Activated CD4-positive, alpha-beta T cell treated with anti-CD3 and anti-CD28 coated beads, Interleukin-2, amount 10 ng/mL, durations not matched to agents 7 days and 5 days (primary cell): ENCODE measurements at regions of chr17 and their contacts with region 1.

Region 1: DNA sequence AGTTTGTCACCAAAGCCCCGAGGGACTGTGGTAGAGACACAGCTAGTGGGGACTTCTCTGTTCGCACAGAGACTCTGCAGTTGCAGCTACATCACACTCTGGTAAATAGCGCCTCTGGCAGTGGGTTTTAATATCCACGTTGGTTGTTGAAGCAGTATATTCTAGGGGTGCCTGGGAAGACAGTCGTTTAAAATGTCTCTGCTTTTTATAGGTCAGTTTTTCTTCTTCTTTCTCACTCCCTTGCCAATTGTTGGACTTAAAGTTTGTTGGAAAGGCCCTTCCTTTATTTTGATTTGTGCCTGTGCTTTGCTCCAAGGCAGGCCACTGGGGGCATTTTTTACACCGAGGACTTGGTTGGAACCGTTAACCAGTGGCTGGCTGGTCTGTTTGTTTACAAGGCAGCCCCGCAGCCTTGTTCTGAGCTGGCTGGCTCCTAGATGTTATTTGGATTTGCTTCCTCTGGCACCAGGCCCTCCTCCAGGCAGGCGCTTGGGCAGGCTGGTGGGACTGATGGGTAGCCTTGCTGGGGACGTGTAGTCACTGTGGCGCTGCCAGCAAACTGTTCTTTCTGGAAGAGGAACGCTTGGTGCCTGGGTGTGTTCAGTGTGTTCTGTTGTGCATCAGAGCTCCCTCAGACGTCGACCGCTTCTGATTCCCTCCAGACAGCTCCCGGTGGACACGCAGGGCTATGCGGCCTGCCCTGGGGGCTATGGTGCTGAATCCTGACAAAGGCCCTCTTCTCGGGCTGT is 218.2 kb upstream of the CHMP6 start:
- DNase-seq: no peak
- H3K4me3 Mint-ChIP-seq: no peak overlapping the region
- H3K27ac Mint-ChIP-seq: peak overlapping the region; percentile 96
- H3K4me1 Mint-ChIP-seq: peaks cover 88% of the 10 kb centered on the region
- H3K27me3 Mint-ChIP-seq: no peaks in the 10 kb centered on the region

Region 2: GRCh38 chr17:80755650-80756405 is 17.6 kb before region 1 on chr17:
- CTCF ChIA-PET with region 1: interaction called, 5 read pairs
- POLR2A ChIA-PET with region 1: interaction called, 10 read pairs
- DNase-seq: no peak
- H3K4me3 Mint-ChIP-seq: no peak overlapping the region
- H3K27ac Mint-ChIP-seq: peak overlapping the region; percentile 33
- H3K4me1 Mint-ChIP-seq: peaks cover 76% of the 10 kb centered on the region
- H3K27me3 Mint-ChIP-seq: no peaks in the 10 kb centered on the region